A673 (cell line): ENCODE measurements at regions of chr21 and their contacts with region 1.

Region 1: GRCh38 chr21:45140346-45140940 is 66.1 kb downstream of the ADARB1 start:
- DNase-seq: peak; percentile 92
- H3K4me3 ChIP-seq: no peak overlapping the region
- H3K27ac ChIP-seq: no peak overlapping the region
- H3K4me1 ChIP-seq: peaks cover 16% of the 10 kb centered on the region
- H3K27me3 ChIP-seq: no peaks in the 10 kb centered on the region
- CTCF ChIP-seq: peak; percentile 93

Region 2: DNA sequence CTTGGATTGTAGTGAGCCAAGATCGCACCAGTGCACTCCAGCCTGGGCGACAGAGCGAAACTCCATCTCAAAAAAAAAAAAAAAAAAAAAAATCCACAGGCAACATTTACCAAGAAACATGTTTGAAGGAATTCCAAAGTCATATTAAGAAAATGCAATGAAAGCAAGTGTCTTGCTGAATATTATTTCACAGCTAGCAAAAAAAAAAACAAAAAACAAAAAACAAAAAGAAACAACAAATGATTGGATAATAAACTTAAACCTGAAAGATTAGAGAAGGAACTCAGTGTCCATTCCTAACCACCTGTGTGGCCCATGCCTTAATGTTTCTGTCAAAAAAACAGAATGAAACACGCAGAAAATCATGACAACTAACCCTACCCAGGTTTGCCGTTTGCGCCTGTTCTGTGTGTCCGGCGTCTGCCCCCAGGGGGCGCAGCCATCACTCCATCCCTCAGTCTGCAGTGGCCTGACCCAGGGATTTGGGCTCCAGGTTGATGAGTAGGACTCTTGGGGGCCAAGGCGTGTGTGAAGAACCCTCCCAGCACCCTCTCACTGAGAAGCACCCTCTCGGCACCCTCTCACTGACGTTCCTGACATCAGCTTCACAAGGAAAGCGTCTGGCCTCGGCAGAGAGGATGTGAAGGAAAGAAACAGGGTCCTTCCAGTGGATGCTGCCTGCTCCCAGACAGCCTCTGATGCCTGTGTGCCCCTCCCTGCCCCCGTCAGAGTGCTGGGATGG is 247.7 kb before region 1 on chr21:
- CTCF ChIA-PET with region 1: no interaction called
- POLR2A ChIA-PET with region 1: no interaction called
- intact Hi-C with region 1: loop called (anchors 5 kb)
- DNase-seq: peak; percentile 76
- H3K4me3 ChIP-seq: no peak overlapping the region
- H3K27ac ChIP-seq: peak overlapping the region; percentile 56
- H3K4me1 ChIP-seq: peaks cover 15% of the 10 kb centered on the region
- H3K27me3 ChIP-seq: no peaks in the 10 kb centered on the region
- CTCF ChIP-seq: peak; percentile 97

Region 3: GRCh38 chr21:45000977-45001728 is 139.3 kb before region 1 on chr21:
- CTCF ChIA-PET with region 1: no interaction called
- POLR2A ChIA-PET with region 1: no interaction called
- intact Hi-C with region 1: no loop called
- DNase-seq: no peak
- H3K4me3 ChIP-seq: no peak overlapping the region
- H3K27ac ChIP-seq: no peak overlapping the region
- H3K4me1 ChIP-seq: no peaks in the 10 kb centered on the region
- H3K27me3 ChIP-seq: no peaks in the 10 kb centered on the region
- CTCF ChIP-seq: no peak

Region 4: GRCh38 chr21:45130324-45130774 is 10.1 kb before region 1 on chr21:
- CTCF ChIA-PET with region 1: interaction called, 25 read pairs
- POLR2A ChIA-PET with region 1: no interaction called
- intact Hi-C with region 1: no loop called
- DNase-seq: peak; percentile 68
- H3K4me3 ChIP-seq: peak overlapping the region; percentile 27
- H3K27ac ChIP-seq: peak overlapping the region; percentile 79
- H3K4me1 ChIP-seq: peaks cover 48% of the 10 kb centered on the region
- H3K27me3 ChIP-seq: no peaks in the 10 kb centered on the region
- CTCF ChIP-seq: no peak

Region 5: DNA sequence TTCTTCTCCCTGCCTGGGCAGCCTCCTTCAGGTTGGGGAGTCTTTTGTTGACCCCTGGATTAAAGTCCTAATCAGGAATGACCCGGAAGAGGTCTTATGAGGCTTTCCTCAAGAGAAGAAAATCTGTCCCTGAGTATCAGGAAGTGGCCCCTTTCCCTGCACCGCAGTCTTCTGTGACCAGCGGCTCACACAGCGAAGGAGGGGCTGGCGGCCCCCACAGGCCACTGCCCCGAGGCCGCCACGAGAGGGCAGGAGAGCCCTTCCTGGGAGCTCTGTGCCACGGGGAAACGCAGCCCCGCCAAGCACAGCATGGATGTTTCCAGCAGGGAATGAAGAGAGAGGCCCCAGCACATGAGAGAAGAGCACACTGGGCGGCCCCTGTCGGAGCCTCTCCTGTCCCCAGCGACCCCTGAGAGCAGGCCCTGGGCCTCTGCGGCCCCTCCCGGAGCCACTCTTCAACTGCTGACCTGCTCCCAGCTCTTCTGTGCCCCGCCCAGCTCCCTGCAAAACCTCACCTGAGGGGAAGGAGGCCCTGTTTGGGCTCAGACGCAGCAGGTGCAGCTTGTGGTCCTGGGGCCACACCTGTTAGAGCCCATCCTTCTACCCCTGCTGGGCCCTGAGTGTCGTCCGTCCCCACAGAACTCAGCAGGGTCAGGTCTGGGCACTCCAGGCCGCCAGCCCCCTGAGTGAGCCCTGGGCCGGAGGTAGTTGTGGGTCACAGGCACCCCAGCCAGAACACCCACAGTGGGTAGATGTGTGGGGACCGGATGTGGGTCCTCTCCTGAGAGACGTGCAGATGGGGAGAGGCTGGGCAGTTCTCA is 152.2 kb after region 1 on chr21:
- CTCF ChIA-PET with region 1: interaction called, 9 read pairs
- POLR2A ChIA-PET with region 1: no interaction called
- intact Hi-C with region 1: loop called (anchors 5 kb)
- DNase-seq: peak; percentile 89
- H3K4me3 ChIP-seq: no peak overlapping the region
- H3K27ac ChIP-seq: peak overlapping the region; percentile 64
- H3K4me1 ChIP-seq: peaks cover 4% of the 10 kb centered on the region
- H3K27me3 ChIP-seq: no peaks in the 10 kb centered on the region
- CTCF ChIP-seq: peak; percentile 94

Region 6: GRCh38 chr21:45655124-45655523 is 514.7 kb after region 1 on chr21:
- CTCF ChIA-PET with region 1: no interaction called
- POLR2A ChIA-PET with region 1: no interaction called
- intact Hi-C with region 1: no loop called
- DNase-seq: peak; percentile 42
- H3K4me3 ChIP-seq: no peak overlapping the region
- H3K27ac ChIP-seq: peak overlapping the region; percentile 60
- H3K4me1 ChIP-seq: peaks cover 20% of the 10 kb centered on the region
- H3K27me3 ChIP-seq: no peaks in the 10 kb centered on the region
- CTCF ChIP-seq: no peak

Region 7: DNA sequence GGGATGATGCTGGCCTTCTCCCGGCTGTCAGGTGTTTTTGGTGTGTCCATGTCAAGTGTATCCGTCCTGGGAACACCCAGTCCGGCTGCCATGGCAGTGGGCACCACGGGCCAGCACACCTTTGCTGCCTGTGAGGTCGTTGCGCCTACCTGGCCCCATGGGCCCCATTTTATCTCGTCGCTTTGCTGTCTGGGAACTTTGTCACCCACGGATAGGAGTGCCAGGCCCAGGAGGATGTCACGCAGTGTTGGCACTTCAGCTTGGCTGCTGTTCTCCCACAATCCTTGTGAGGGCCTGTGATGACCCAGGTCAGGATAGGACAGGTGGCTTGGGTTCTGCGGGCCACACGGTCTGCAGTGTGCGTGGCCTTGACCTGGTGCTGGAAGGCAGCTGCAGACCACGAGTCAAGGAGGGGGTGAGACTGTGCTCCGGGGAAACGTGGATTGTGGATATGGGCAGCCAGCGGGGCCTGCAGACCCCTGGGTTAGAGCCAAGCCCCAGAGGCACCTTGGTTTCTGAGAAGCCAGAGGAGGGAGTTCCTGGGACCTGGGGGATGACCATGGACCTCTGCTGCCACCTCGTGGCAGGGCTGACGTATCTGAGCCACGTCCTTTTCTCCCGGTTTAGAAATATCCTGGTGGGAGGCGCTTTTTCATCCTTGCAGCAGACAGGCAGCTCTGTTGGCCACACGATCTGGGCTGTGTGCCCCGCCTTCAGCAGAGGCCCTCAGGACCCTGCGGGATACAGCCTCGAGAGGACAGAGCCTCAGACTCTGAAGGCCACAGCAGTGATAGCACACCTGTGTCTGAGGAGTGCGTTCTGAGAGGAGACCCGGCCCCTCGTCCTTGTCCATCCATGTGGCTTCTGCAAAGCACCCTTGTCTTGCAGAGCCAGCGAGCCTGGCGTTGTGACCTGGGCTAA is 680.0 kb after region 1 on chr21:
- CTCF ChIA-PET with region 1: no interaction called
- POLR2A ChIA-PET with region 1: no interaction called
- intact Hi-C with region 1: loop called (anchors 10 kb)
- DNase-seq: peak; percentile 91
- H3K4me3 ChIP-seq: no peak overlapping the region
- H3K27ac ChIP-seq: no peak overlapping the region
- H3K4me1 ChIP-seq: peaks cover 13% of the 10 kb centered on the region
- H3K27me3 ChIP-seq: no peaks in the 10 kb centered on the region
- CTCF ChIP-seq: peak; percentile 92